ENCODE measurements at regions of chr21 and their contacts with region 1.

Region 1: DNA sequence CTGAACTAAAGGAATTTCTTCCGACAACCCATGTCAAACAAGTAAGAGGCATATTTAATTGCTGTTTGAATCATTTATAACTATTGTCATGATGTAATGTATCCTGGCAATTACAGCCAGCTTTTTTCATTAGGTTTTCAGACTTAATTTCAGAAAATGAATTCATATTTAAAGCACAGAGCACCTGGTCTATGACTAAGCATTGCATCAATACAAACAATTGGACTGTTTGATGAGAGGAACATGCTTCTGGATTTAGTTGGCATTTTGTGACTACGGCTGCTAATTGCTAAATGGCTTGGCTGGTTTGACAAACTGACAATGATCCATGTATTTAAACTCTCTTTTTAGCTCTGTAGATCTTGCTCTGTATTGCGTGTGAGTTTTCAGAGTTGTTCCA is 853.4 kb downstream of the NCAM2 start:
- DNase-seq: no peak
- ATAC-seq: no peak
- H3K4me3 ChIP-seq: no peak overlapping the region
- H3K27ac ChIP-seq: no peak overlapping the region
- H3K4me1 ChIP-seq: no peaks in the 10 kb centered on the region
- H3K27me3 ChIP-seq: no peaks in the 10 kb centered on the region
- CTCF ChIP-seq: no peak
- POLR2A ChIP-seq: no peak

Region 2: DNA sequence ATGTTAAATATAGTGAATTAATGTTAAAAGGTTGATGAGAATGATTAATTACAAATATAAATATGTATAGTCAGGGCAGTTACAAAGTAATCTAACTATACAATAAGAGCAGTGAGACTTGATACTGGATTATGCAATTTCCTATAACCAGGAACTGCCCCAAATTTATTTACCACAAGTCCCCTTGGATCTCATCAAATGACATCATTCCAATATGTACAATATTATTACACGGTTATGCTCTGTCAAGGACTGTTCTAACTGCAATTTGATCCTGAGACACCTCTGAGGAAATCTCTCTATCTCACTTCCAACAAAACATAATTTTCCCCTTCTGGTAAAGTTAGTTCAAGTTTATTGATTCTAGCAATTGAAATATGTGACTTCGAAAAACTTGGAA is 64.2 kb after region 1 on chr21:
- intact Hi-C with region 1: loop called in 1 of 10 experiments (anchors 10 kb)
- DNase-seq: no peak
- ATAC-seq: no peak
- H3K4me3 ChIP-seq: no peak overlapping the region
- H3K27ac ChIP-seq: no peak overlapping the region
- H3K4me1 ChIP-seq: no peaks in the 10 kb centered on the region
- H3K27me3 ChIP-seq: no peaks in the 10 kb centered on the region
- CTCF ChIP-seq: no peak
- POLR2A ChIP-seq: no peak

Measured in heart left ventricle (tissue), 16 donors.